Caco-2 (cell line): ENCODE measurements at regions of chr4 and their contacts with region 1.

Region 1: GRCh38 chr4:94127707-94128328 is 79.8 kb upstream of the SMARCAD1 start:
- DNase-seq: peak in 1 of 2 experiments; percentile 13
- H3K4me3 ChIP-seq: no peak overlapping the region
- H3K4me3 Mint-ChIP-seq: no peak overlapping the region
- H3K27ac Mint-ChIP-seq: no peak overlapping the region
- H3K4me1 ChIP-seq: no peaks in the 10 kb centered on the region
- H3K4me1 Mint-ChIP-seq: no peaks in the 10 kb centered on the region
- H3K27me3 ChIP-seq: no peaks in the 10 kb centered on the region
- H3K27me3 Mint-ChIP-seq: peaks cover 3% of the 10 kb centered on the region
- CTCF ChIP-seq: peak; percentile 29 to 45

Region 2: GRCh38 chr4:93897559-93897958 is 230.3 kb before region 1 on chr4:
- CTCF ChIA-PET with region 1: no interaction called
- POLR2A ChIA-PET with region 1: no interaction called
- intact Hi-C with region 1: loop called (anchors 1 kb)
- DNase-seq: no peak
- H3K4me3 ChIP-seq: no peak overlapping the region
- H3K4me3 Mint-ChIP-seq: no peak overlapping the region
- H3K27ac Mint-ChIP-seq: no peak overlapping the region
- H3K4me1 ChIP-seq: no peaks in the 10 kb centered on the region
- H3K4me1 Mint-ChIP-seq: no peaks in the 10 kb centered on the region
- H3K27me3 ChIP-seq: no peaks in the 10 kb centered on the region
- H3K27me3 Mint-ChIP-seq: no peaks in the 10 kb centered on the region
- CTCF ChIP-seq: peak in 1 of 2 experiments; percentile 29